WTC11 (cell line): ENCODE measurements at regions of chr15 and their contacts with region 1.

Region 1: DNA sequence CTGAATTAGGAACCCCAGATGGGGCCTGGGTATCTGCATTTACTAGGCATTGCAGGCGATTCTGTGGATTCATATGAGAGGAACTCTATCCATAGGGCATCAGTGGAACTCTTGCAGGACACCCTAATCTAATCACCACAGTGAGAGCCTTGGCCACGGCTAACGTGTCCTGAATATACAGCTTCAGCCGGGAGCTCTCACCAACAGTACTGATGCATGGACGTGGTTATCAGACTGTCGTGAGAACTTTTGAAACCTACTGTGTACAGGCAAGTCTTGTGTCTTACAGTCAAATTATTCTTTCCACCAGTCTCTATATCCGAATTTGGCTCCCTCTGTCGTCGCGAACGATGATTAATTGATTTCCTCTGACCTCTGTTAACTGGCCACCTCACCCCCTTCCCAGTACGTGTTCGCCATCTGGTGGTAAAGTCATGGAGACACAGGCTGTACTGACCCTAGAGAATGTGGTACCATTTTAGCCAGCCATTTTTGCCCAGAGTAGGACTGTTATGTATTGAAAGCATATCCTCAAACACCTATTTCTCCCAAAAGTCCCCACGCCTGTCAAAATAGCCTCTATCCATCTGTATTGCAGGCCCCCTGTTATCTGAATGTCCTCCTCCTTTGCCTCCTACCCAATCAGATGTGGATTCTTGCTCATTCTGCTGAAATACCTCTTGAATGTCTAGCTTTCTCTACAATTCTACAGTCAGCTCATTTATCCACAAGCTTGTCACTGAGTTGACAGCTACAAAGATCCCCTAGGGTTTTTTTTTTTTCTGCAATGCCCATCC is 39.7 kb downstream of the GLDN start:
- DNase-seq: peak; percentile 60
- ATAC-seq: peak; percentile 93
- H3K4me3 Mint-ChIP-seq: no peak overlapping the region
- H3K27ac Mint-ChIP-seq: no peak overlapping the region
- H3K4me1 Mint-ChIP-seq: peaks cover 4% of the 10 kb centered on the region
- H3K27me3 Mint-ChIP-seq: peaks cover 2% of the 10 kb centered on the region; the same call in 1 of the 2 replicates
- CTCF ChIP-seq: peak; percentile 80

Region 2: DNA sequence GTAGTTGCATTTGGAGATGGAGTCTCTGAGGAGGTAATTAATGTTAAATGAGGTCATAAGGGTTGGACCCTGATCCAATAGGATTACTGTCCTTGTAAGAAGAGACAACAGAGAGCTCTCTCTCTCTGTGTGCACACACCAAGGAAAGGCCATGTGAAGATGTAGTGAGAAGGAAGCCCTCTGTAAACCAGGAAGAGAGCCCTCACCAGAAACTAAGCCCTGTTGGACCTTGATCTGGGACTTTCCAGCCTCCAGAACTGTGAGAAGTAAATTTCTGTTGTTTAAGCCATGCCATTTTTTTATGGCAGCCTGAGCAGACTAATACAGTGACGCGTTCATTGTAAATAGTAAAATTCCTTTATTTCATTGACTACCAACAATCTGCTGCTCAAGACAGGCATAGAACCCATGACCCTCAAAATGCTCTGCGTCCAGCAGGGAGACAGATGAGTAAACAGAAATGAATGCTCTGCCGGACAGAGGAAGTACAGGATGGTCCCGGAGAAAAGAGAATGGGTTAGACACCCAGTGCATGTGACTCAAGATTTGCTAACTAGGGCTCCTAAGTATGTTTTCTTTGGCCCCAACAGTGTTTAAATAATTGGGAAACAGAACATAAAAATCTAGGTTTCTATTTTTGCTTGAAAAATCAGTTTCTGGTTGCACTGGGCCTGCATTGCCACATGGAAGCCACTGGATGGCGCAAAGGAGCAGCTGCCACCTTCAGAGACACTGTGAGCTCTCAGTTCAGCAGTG is 248.6 kb before region 1 on chr15:
- CTCF ChIA-PET with region 1: interaction called, 14 read pairs
- POLR2A ChIA-PET with region 1: no interaction called
- DNase-seq: peak; percentile 56
- ATAC-seq: peak; percentile 92
- H3K4me3 Mint-ChIP-seq: no peak overlapping the region
- H3K27ac Mint-ChIP-seq: peak overlapping the region; percentile 16; the same call in 1 of the 2 replicates
- H3K4me1 Mint-ChIP-seq: peaks cover 9% of the 10 kb centered on the region
- H3K27me3 Mint-ChIP-seq: no peaks in the 10 kb centered on the region
- CTCF ChIP-seq: peak; percentile 89

Region 3: GRCh38 chr15:51192521-51193280 is 188.5 kb before region 1 on chr15:
- CTCF ChIA-PET with region 1: interaction called, 12 read pairs
- POLR2A ChIA-PET with region 1: no interaction called
- DNase-seq: peak; percentile 98
- ATAC-seq: peak; percentile 97
- H3K4me3 Mint-ChIP-seq: no peak overlapping the region
- H3K27ac Mint-ChIP-seq: no peak overlapping the region
- H3K4me1 Mint-ChIP-seq: peaks cover 20% of the 10 kb centered on the region
- H3K27me3 Mint-ChIP-seq: no peaks in the 10 kb centered on the region; the same call in 1 of the 2 replicates
- CTCF ChIP-seq: peak; percentile 96

Region 4: DNA sequence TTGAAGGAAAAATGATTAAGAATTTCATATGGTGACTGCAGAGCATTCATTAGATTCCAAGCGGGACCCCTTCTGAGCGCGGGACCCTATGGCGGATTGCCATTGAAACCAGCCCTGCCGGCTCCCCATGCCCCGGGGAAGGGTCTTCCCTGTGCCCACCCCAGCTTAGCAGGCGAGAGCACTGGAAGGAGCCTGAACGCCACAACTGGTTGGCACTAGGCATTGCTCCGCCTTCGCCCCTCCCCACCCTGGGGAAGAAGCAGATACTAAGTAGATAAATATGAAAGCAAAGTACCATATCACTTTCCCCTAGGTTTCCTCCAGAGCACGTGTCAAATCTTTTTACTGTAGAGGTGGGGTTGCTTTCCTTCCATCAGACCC is 113.5 kb before region 1 on chr15:
- CTCF ChIA-PET with region 1: interaction called, 16 read pairs
- POLR2A ChIA-PET with region 1: no interaction called
- DNase-seq: peak; percentile 29
- ATAC-seq: peak; percentile 69
- H3K4me3 Mint-ChIP-seq: peak overlapping the region; percentile 69
- H3K27ac Mint-ChIP-seq: no peak overlapping the region
- H3K4me1 Mint-ChIP-seq: peaks cover 9% of the 10 kb centered on the region
- H3K27me3 Mint-ChIP-seq: peaks cover 4% of the 10 kb centered on the region
- CTCF ChIP-seq: no peak

Region 5: GRCh38 chr15:51281368-51281967 is 99.7 kb before region 1 on chr15:
- CTCF ChIA-PET with region 1: interaction called, 49 read pairs
- POLR2A ChIA-PET with region 1: interaction called, 3 read pairs
- DNase-seq: peak; percentile 80
- ATAC-seq: peak; percentile 99
- H3K4me3 Mint-ChIP-seq: no peak overlapping the region
- H3K27ac Mint-ChIP-seq: no peak overlapping the region
- H3K4me1 Mint-ChIP-seq: no peaks in the 10 kb centered on the region
- H3K27me3 Mint-ChIP-seq: no peaks in the 10 kb centered on the region; the same call in 1 of the 2 replicates
- CTCF ChIP-seq: peak; percentile 58

Region 6: DNA sequence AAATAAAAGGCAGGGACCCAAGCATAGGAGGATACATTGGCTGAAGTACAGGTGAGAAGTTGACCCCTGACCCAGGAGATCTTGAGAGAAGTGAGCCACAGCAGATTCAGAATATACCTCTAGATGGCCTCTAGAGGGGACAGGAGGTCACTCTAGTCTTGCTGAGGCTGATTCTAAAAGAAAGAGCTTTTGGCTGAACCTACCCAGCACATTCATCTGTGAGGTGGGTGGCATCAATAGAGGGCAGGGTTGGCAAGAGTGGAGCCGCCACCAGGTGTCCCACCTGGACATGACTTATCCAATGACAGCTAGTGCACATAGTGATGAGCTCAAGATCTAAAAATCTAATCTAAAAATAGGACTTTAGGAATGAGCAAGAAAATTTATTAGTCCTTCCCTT is 94.4 kb before region 1 on chr15:
- CTCF ChIA-PET with region 1: interaction called, 49 read pairs
- POLR2A ChIA-PET with region 1: interaction called, 3 read pairs
- DNase-seq: no peak
- ATAC-seq: peak; percentile 74
- H3K4me3 Mint-ChIP-seq: no peak overlapping the region
- H3K27ac Mint-ChIP-seq: no peak overlapping the region
- H3K4me1 Mint-ChIP-seq: no peaks in the 10 kb centered on the region
- H3K27me3 Mint-ChIP-seq: no peaks in the 10 kb centered on the region; the same call in 1 of the 2 replicates
- CTCF ChIP-seq: no peak

Region 7: GRCh38 chr15:51533672-51534398 is 152.6 kb after region 1 on chr15:
- CTCF ChIA-PET with region 1: no interaction called
- POLR2A ChIA-PET with region 1: no interaction called
- DNase-seq: no peak
- ATAC-seq: no peak
- H3K4me3 Mint-ChIP-seq: no peak overlapping the region
- H3K27ac Mint-ChIP-seq: no peak overlapping the region
- H3K4me1 Mint-ChIP-seq: no peaks in the 10 kb centered on the region
- H3K27me3 Mint-ChIP-seq: no peaks in the 10 kb centered on the region
- CTCF ChIP-seq: no peak

Region 8: DNA sequence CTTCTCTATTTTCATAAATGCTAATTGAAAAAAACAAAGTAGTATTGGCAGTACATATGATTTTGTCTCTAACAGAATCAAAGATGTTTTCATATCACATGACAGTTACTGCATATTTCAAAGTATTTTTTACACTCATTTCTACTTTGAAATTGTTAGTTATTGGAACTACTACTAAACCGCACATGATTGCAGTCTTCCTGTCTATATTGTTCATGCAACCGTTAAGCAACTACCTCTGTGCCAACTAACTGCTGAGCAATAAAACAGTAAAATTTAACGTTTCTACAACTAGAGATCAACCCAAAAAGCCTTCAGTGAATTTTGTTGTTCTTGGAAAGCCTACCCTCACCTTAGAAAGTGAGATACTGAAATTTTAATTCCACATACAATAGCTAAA is 177.2 kb after region 1 on chr15:
- CTCF ChIA-PET with region 1: no interaction called
- POLR2A ChIA-PET with region 1: no interaction called
- DNase-seq: no peak
- ATAC-seq: no peak
- H3K4me3 Mint-ChIP-seq: no peak overlapping the region
- H3K27ac Mint-ChIP-seq: no peak overlapping the region
- H3K4me1 Mint-ChIP-seq: no peaks in the 10 kb centered on the region
- H3K27me3 Mint-ChIP-seq: no peaks in the 10 kb centered on the region
- CTCF ChIP-seq: no peak